ENCODE measurements at regions of chr17 and their contacts with region 1.

Region 1: DNA sequence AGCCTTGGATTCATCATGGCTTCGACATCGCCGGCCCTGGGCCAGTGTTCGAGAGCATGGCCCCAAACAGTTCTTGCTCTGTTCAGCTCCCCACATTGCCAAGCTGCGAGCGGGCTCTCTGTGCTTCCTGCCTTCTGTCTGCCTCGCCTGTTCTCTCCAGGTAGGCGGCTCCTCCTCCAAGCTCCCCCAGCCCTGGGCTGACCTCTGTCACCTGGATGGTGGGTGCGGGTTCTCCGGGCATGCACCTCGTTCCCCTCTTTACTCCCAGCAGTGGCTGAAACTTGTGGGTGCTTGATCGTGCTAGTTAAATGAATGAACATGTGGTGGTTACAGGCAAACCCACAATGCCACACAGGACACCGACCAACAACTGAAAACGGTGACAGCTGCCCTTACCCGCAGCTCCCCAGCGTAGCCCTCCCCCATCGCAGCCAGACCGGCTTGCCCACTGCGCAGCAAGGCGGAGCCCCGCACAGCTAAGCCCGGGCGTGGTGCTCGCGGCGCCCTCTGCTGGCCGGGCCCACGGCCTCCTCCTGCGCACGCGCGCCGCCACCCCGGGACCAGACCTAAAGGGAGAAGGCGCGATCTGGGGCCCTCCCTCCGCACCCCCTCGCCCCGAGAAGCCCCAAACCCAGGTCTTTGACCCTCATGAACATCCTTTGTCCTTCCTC is 23.0 kb upstream of the EIF1 start:
- DNase-seq: peak; percentile 95

Region 2: DNA sequence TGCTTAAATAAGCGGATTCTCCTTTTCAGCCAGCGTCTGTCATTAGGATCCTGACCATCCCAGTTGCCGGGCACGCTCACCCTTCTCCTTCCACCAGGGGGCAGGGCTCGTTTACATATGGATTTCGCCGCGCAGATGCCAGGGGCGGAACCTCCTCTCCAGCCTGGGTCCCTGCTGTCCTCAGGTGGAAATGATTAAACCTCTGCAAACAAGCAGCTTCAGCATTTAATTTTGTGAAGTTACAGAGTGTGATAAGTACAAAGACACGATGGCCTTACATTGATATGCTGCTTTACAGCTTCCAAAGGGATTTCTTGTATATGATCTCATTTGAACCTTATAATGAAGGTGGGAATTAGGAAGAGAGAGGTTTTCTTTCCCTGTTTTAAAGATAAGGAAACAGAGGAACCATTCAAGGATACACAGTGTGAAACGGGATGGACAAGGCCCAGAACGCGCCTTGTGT is 862.1 kb before region 1 on chr17:
- intact Hi-C with region 1: loop called (anchors 5 kb)
- DNase-seq: peak; percentile 79

Region 3: GRCh38 chr17:40857535-40857934 is 808.2 kb before region 1 on chr17:
- intact Hi-C with region 1: loop called (anchors 2 kb)
- DNase-seq: no peak

Region 4: DNA sequence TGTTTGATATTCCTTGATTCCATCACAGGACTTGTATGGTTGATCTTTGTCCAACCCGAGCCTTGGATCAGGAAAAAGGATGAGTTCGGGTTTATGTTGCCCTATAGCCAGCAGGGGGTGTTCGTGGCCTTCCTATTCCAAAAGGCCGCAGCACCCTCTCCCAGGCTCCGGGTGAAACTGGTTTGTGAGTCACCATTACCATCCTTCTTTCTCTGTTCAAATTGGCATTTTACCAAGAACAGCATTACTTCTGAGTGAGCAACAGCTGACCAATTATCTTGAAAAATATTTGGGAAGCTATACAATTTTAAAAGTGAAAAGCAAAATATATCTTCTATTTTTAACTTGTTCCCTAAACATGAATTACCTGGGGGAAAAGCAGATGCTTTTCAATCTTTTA is 756.4 kb before region 1 on chr17:
- intact Hi-C with region 1: loop called (anchors 5 kb)
- DNase-seq: peak; percentile 82

Region 5: GRCh38 chr17:41486809-41487720 is 178.6 kb before region 1 on chr17:
- intact Hi-C with region 1: no loop called
- DNase-seq: peak; percentile 88

Region 6: DNA sequence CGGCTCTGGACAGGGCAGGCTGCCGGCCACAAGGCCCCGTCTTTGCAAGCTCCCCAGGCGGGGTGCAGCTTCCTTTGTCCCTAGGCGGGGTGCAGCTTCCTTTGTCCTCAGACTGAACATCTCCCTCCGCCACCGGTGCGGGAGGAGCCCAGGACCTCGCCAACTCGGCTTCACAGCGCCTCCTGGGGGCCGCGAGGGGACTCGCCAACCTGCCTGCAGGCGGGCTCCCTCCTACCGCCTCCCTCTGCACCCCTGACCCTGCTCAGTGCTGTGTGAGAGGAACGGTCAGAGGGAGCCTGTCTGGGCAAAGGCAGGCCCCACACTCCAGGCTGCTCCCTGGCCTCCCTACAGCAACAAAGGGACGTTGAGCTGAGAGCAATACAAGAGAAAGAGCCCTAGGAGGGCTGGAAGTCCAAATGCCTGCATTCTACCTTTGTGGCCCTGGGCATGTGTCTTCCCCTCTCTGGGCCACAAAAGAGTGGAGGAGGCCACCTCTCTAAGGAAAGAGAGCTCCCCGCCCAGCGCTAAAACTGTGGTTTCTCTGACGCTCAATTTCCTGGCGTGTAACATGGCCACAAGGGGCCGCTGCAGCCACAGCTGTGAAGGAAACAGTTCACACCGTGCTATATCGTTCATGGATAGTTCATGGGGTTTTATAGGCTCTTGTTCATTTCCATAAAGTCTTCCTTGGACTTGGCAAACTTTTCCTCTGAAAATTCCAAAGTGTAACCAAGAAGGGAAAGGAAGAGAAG is 116.7 kb before region 1 on chr17:
- intact Hi-C with region 1: loop called (anchors 1 kb)
- DNase-seq: peak; percentile 94

Region 7: GRCh38 chr17:41648411-41649195 is 17.1 kb before region 1 on chr17:
- intact Hi-C with region 1: loop called (anchors 1 kb)
- DNase-seq: peak; percentile 92

Region 8: DNA sequence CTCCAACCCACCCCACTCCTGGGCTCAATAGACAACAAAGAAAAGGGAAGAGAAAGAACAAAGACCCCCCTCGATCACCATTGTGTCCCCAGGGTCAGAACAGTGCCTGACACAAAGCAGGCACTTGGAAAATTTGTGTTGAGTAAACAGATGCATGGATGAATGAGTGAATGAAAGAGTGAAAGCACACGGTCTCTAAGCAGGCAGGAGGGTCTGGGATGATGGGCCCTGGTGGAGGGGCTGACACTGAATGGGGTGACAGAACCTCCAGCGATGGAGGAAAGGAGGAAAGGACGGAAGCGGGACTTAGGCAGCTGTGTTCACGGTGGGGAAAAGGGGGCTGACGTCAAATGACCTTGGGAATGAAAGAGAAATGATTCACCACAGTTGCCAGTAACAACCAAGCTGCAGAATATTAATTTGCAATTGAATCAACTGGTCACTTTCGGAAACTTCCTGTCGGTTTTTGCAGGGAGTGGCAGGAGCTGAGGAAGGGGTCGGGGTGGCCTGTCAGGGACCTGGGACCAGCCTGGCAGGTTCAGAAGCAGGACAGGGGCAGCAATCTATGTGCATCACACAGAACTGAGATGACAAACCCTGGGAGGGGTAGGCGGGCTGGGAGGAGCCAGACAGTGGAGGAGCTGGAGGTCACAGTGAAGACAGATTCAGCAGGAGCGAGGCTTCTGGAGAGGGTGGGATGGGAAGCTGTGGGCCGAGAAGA is 39.7 kb after region 1 on chr17:
- intact Hi-C with region 1: no loop called
- DNase-seq: no peak

Region 9: GRCh38 chr17:42252528-42253172 is 586.9 kb after region 1 on chr17:
- intact Hi-C with region 1: no loop called
- DNase-seq: no peak

Measured in cardiac septum (tissue), 1 donor.